ENCODE measurements at regions of chr19 and their contacts with region 1.

Region 1: DNA sequence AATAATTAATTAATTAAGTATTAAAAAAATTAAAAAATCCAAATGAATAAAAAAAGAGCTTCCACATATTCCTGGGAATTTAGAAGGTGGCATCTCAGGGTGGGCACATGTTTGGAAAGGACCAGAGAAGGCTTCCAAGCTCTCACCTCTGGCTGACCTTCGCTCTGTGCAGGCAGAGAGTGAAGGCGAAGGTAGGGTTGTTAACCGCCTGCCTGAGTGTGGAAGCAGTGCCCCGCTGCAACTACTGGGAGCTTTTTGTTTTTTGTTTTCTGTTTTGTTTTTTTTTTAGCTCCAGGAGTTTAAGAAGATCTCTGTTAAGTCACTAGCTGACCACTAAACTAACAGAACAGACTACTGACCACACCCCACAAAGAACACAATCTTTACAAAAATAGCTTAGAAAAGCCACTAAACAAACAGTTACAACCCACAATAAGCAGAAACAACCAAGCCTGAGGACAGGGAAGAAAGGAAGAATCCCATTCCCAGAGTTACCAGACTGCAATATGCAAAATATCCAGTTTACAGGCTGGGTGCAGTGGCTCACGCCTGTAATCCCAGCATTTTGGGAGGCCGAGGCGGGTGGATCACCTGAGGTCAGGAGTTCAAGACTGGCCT is 11.4 kb downstream of the ZNF541 start:
- DNase-seq: no peak
- ATAC-seq: no peak
- H3K4me3 ChIP-seq: no peak overlapping the region
- H3K27ac ChIP-seq: no peak overlapping the region
- H3K4me1 ChIP-seq: no peaks in the 10 kb centered on the region
- H3K27me3 ChIP-seq: peaks cover 11% of the 10 kb centered on the region
- CTCF ChIP-seq: no peak
- POLR2A ChIP-seq: no peak
- RAD21 ChIP-seq: no peak

Region 2: GRCh38 chr19:47456721-47457478 is 104.6 kb before region 1 on chr19:
- CTCF ChIA-PET with region 1: no interaction called
- POLR2A ChIA-PET with region 1: no interaction called
- dilution Hi-C with region 1: no loop called
- in situ Hi-C with region 1: no loop called
- intact Hi-C with region 1: no loop called
- DNase-seq: no peak
- ATAC-seq: no peak
- H3K4me3 ChIP-seq: no peak overlapping the region
- H3K27ac ChIP-seq: no peak overlapping the region
- H3K4me1 ChIP-seq: no peaks in the 10 kb centered on the region
- H3K27me3 ChIP-seq: peaks cover 62% of the 10 kb centered on the region
- CTCF ChIP-seq: no peak
- POLR2A ChIP-seq: no peak
- RAD21 ChIP-seq: no peak

Region 3: DNA sequence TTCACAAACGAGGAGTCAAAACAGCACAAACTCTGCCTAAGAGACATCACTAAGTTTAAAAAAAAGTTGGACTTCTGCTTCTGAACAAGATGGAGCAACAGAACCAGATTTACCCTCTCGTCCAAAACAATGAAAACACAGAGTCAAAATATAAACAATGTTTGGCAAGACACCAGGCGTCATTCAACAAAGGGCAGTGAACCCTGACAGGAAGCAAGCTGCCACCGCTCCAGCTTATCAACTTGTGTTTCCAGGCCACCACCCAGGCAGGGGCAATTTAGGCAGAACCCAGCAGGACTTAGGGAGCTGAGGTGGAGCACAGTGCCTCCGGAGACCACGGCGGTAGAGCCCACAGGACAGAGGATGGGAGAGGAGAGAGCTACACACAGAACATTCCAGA is 38.1 kb before region 1 on chr19:
- CTCF ChIA-PET with region 1: no interaction called
- POLR2A ChIA-PET with region 1: no interaction called
- dilution Hi-C with region 1: no loop called
- in situ Hi-C with region 1: no loop called
- intact Hi-C with region 1: loop called (anchors 5 kb)
- DNase-seq: no peak
- ATAC-seq: no peak
- H3K4me3 ChIP-seq: no peak overlapping the region
- H3K27ac ChIP-seq: no peak overlapping the region
- H3K4me1 ChIP-seq: peaks cover 2% of the 10 kb centered on the region; the same call in 1 of the 2 replicates
- H3K27me3 ChIP-seq: peaks cover 25% of the 10 kb centered on the region
- CTCF ChIP-seq: no peak
- POLR2A ChIP-seq: no peak
- RAD21 ChIP-seq: no peak